Ascending aorta (tissue), 2 donors: ENCODE measurements at regions of chr17 and their contacts with region 1.

Region 1: DNA sequence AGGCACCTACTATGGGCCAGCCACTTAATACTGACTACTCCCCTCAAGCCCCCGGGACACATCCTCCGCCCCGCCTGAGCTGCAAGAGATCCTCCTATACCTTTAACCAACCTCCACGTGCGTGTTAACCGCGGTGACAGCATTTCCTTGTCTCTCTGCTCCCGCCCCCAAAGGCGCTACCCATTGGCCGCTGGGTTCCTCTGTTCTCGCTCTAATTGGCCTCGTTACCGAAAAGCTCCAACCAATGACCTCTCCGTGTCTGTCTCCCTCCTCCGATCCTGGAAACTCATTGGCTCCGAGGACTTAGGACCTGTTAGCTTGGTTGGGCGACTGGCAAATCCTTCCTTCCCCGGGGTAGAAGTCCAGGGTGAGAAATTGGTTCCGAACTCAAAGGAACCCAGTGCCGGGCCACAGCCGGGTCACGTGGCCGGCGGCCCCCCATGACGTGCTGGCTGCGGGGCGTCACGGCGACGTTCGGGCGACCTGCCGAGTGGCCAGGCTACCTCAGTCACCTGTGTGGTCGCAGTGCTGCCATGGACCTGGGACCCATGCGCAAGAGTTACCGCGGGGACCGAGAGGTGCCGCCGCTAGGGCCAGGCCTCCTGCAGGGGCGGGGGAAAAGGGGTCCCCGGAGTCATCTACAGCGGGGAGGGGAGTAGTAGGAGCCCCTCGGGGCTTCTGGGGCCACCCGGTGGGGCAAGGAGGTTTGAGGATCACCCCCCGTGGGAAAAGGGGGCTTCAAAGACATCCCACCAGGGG is at the start of gene PNPO:
- DNase-seq: peak; percentile 94 to 98
- H3K4me3 ChIP-seq: peak within 1 kb of the TSS; percentile 93 to 96
- H3K27ac ChIP-seq: peak within 1 kb of the TSS; percentile 69 to 84
- H3K4me1 ChIP-seq: peaks cover 7 to 12% of the 10 kb centered on the region in 2 donors
- H3K27me3 ChIP-seq: no peaks in the 10 kb centered on the region
- CTCF ChIP-seq: peak in 1 of 3 experiments; percentile 4
- total RNA-seq, gene PNPO: 36.7 TPM

Region 2: DNA sequence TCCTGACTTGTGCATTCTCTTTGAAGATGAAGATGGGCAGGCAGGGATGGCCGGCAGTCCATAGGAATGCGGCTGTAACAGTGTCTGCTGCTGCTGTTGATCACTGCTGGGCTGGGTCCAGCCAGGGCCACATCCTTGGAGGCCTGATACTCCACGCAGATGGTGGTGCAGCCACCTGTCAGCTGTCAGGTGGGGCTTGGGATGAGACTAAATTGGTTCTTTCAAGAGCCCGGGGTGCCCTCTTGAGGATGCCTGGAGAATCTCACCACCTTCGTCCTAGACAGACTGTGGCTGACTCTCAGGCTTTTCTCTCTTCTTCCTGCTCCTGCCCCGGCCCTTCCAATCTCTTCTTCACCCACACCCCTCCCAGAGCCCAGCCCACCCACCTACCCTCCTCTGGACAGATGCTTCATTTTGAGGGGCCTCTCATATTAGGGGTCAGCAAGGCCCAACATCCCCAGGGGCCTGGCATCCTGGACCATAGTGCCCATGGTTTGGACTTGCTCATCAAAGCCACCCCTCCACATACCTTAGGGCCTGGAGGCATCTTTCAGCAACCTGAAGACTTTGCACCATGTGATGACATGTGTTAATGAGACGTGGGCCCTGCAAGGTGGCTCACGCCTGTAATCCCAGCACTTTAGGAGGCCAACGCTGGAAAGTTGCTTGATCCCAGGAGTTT is 138.9 kb before region 1 on chr17:
- intact Hi-C with region 1: no loop called
- DNase-seq: no peak
- H3K4me3 ChIP-seq: no peak overlapping the region
- H3K27ac ChIP-seq: no peak overlapping the region
- H3K4me1 ChIP-seq: no peaks in the 10 kb centered on the region
- H3K27me3 ChIP-seq: no peaks in the 10 kb centered on the region
- CTCF ChIP-seq: peak; percentile 14 to 47 (median 21)

Region 3: DNA sequence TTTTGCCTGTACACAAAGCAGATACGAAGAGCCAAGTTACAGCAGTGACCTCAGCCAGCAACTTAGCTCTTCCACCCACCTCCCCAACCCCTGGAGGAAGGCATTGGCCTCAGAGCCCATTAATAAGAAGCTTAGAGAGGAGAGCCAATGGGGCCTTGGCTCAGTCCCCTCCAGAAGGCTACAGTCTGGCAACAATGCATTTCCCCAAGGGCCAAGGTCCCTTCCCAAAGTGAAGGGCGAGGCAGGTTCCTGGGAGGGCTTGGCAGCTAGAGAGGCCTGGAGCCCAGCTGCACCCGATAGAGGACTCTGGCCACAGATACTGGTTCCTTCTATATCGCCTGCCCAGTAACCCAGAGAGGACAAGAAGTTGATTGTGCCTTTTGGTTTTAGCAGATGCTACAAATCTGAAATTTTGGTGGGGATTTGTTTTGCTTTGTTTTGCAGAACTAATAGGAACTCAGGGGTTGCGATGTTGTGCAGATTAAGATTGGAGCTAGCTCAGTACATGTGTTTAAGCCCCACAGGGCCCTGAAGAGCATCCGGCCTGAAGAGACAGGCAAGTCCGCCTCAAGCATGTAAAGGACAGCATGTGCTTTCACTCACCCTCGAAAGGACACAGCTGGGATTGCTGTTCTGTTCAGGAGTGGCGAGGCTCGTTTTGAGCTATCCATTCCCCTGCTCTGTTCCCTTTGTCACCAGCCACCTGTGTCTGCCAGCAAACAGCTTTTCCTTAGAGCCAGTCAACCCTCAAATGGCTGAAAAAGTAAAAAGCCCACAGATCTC is 12.0 kb before region 1 on chr17:
- intact Hi-C with region 1: no loop called
- DNase-seq: no peak
- H3K4me3 ChIP-seq: no peak overlapping the region
- H3K27ac ChIP-seq: no peak overlapping the region
- H3K4me1 ChIP-seq: no peaks in the 10 kb centered on the region
- H3K27me3 ChIP-seq: no peaks in the 10 kb centered on the region
- CTCF ChIP-seq: no peak

Region 4: GRCh38 chr17:48107168-48108132 is 166.0 kb after region 1 on chr17 and contains the start of gene SNX11:
- intact Hi-C with region 1: loop called (anchors 10 kb)
- DNase-seq: peak; percentile 79 to 94
- H3K4me3 ChIP-seq: peak within 1 kb of the TSS; percentile 65 to 84
- H3K27ac ChIP-seq: peak within 1 kb of the TSS; percentile 92 to 95
- H3K4me1 ChIP-seq: peaks cover 5 to 10% of the 10 kb centered on the region in 2 donors
- H3K27me3 ChIP-seq: no peaks in the 10 kb centered on the region
- CTCF ChIP-seq: no peak
- total RNA-seq, gene SNX11: 6.6 TPM